ENCODE measurements at regions of chr13 and their contacts with region 1.

Region 1: GRCh38 chr13:104057851-104058250 is 991.6 kb upstream of the SLC10A2 start:
- DNase-seq: no peak
- H3K4me3 ChIP-seq: no peak overlapping the region
- H3K27ac ChIP-seq: no peak overlapping the region
- H3K4me1 ChIP-seq: no peaks in the 10 kb centered on the region
- H3K27me3 ChIP-seq: no peaks in the 10 kb centered on the region
- CTCF ChIP-seq: no peak

Region 2: GRCh38 chr13:103716718-103717117 is 341.1 kb before region 1 on chr13:
- intact Hi-C with region 1: loop called (anchors 5 kb)
- DNase-seq: no peak
- H3K4me3 ChIP-seq: no peak overlapping the region
- H3K27ac ChIP-seq: no peak overlapping the region
- H3K4me1 ChIP-seq: no peaks in the 10 kb centered on the region
- H3K27me3 ChIP-seq: no peaks in the 10 kb centered on the region
- CTCF ChIP-seq: no peak

Region 3: GRCh38 chr13:103762523-103762922 is 295.3 kb before region 1 on chr13:
- intact Hi-C with region 1: no loop called
- DNase-seq: no peak
- H3K4me3 ChIP-seq: no peak overlapping the region
- H3K27ac ChIP-seq: no peak overlapping the region
- H3K4me1 ChIP-seq: no peaks in the 10 kb centered on the region
- H3K27me3 ChIP-seq: no peaks in the 10 kb centered on the region
- CTCF ChIP-seq: no peak